ENCODE measurements at regions of chr2 and their contacts with region 1.

Region 1: GRCh38 chr2:172465417-172466334 is 38.3 kb downstream of the ITGA6 start:
- DNase-seq: peak; percentile 63
- ATAC-seq: peak; percentile 31
- H3K4me3 Mint-ChIP-seq: no peak overlapping the region
- H3K27ac Mint-ChIP-seq: peak overlapping the region; percentile 11
- H3K4me1 Mint-ChIP-seq: peaks cover 47% of the 10 kb centered on the region
- H3K27me3 Mint-ChIP-seq: no peaks in the 10 kb centered on the region
- CTCF ChIP-seq: peak; percentile 78

Region 2: DNA sequence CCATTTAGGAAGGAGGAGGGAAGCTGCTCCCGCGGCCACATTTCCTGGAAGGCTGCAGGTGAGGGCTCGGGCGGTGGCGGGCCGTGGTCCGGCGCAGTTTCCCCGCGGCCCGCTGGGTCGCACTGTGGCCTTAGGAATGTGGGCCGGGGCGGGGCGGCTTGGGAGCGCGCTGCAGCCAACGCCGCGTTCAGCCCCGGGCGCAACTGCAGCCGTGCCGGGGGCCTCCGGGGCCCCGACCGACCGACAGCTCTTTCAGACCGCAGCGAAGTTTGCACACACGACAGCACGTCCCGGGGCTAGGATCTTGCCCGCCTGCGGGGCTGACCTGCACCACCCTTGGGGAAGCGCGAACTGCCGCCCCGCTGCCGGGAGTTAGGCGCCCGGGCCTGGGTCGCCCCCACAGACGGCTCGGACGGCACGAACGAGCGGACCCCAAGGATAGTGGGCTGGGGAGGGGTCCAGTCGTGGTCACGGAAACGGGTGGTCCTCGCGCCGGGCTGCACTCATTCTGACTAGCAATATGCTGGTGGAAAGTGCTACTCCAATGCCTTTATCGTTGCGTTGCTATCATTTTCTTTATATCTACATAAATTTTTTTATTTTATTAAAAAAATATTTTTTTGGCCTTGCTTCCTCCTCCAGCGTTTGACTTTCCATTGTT is 293.0 kb before region 1 on chr2:
- CTCF ChIA-PET with region 1: interaction called, 136 read pairs
- POLR2A ChIA-PET with region 1: interaction called, 11 read pairs
- DNase-seq: peak; percentile 87
- ATAC-seq: peak; percentile 99
- H3K4me3 Mint-ChIP-seq: peak overlapping the region; percentile 67
- H3K27ac Mint-ChIP-seq: no peak overlapping the region
- H3K4me1 Mint-ChIP-seq: peaks cover 19% of the 10 kb centered on the region
- H3K27me3 Mint-ChIP-seq: peaks cover 10% of the 10 kb centered on the region
- CTCF ChIP-seq: 0 out of 2 replicates have a peak, but pooled peaks have one; percentile 44

Region 3: DNA sequence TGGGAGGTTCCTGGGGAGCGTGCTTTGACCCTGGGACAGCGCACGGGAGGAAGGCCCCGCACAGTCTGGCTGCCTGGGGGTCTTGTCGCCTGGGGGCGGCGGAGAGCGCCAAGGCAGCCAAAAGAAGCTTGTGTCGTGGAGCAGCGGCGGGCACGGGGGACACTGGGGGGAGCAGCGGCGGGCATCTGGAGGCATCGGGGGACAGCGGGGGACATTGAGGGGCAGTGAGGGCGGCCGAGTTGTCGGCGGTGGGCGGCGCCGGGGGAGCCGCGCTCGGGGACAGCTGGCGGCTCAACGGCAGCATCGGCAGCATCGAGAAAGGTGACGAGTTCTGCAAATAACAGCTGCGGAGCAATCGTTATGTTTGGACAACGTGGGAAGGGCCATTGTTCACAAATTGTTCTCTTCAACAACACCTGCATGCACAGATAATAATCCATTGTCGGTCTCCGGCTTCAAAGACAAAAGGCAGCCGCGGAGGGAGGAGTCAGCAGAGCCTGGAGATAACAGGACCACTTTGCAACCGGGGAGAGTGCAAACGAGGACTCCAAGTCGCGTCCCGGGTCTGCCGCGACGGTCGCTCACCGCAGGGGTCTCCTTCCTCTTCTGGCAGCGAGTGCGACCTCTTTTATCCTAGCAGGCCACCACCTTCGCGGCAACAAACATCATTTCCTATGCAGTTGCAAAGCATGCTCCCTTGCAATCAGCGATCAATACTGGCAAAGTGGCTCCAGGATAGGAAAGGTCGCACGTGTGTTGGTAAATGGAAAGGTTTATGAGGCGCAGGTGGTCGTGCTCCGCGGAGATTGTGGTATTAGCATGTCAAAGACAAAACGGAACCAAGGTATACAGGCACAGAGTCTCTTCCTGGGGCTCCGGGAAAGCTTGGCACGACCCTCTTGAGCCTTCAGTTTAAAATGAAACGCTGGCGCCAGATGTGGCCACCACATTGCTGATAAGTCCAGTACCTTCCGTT is 230.7 kb before region 1 on chr2:
- CTCF ChIA-PET with region 1: interaction called, 22 read pairs
- POLR2A ChIA-PET with region 1: no interaction called
- DNase-seq: peak; percentile 68
- ATAC-seq: peak; percentile 73
- H3K4me3 Mint-ChIP-seq: peak overlapping the region; percentile 75
- H3K27ac Mint-ChIP-seq: peak overlapping the region; percentile 78
- H3K4me1 Mint-ChIP-seq: peaks cover 58% of the 10 kb centered on the region
- H3K27me3 Mint-ChIP-seq: peaks cover 32% of the 10 kb centered on the region
- CTCF ChIP-seq: no peak

Region 4: DNA sequence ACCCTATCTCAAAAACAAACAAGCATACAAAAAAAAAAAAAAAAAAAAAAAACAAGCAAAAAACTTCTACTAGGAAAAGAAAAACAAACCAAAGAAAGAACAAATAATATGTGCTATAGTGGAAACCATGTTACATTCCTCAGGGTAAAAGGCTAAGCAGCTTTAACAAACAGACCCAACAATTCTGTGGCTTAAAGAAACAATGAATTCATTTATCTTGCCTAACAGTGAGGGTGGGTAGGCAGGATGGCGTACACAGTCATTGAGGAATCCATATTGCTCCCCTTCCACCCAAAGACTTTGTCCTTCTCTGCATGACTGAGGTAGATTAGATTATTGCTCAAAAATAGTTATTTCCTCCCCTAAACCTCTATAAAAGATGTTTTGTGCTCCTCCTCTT is 101.4 kb before region 1 on chr2:
- CTCF ChIA-PET with region 1: interaction called, 10 read pairs
- POLR2A ChIA-PET with region 1: no interaction called
- DNase-seq: no peak
- ATAC-seq: no peak
- H3K4me3 Mint-ChIP-seq: no peak overlapping the region
- H3K27ac Mint-ChIP-seq: peak overlapping the region; percentile 69; the same call in 1 of the 2 replicates
- H3K4me1 Mint-ChIP-seq: no peaks in the 10 kb centered on the region
- H3K27me3 Mint-ChIP-seq: peaks cover 5% of the 10 kb centered on the region
- CTCF ChIP-seq: no peak

Region 5: DNA sequence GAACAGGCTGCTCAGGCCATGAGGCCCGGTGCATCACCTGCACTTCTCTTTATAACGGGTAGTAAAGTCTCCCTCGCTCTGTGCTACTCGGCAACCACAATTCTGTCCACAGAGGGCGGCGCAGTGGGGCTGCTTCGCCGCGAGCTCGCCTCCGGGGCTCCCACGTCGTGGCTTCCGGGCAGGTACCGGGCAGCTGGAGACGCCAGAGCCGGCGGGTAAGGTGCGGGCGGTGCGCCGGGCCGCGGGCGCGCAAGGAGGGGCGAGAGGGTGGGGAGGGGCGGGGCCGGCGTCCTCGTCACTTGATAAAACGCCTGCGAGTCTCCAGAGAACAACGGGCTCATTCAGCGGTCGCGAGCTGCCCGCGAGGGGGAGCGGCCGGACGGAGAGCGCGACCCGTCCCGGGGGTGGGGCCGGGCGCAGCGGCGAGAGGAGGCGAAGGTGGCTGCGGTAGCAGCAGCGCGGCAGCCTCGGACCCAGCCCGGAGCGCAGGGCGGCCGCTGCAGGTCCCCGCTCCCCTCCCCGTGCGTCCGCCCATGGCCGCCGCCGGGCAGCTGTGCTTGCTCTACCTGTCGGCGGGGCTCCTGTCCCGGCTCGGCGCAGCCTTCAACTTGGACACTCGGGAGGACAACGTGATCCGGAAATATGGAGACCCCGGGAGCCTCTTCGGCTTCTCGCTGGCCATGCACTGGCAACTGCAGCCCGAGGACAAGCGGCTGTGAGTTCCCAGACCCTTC is 38.3 kb before region 1 on chr2 and contains the start of gene ITGA6:
- CTCF ChIA-PET with region 1: interaction called, 88 read pairs
- POLR2A ChIA-PET with region 1: interaction called, 9 read pairs
- DNase-seq: peak; percentile 79
- ATAC-seq: peak; percentile 66
- H3K4me3 Mint-ChIP-seq: peak within 1 kb of the TSS; percentile 91
- H3K27ac Mint-ChIP-seq: peak within 1 kb of the TSS; percentile 87
- H3K4me1 Mint-ChIP-seq: peaks cover 28% of the 10 kb centered on the region
- H3K27me3 Mint-ChIP-seq: peaks cover 13% of the 10 kb centered on the region
- CTCF ChIP-seq: no peak
- total RNA-seq, gene ITGA6: 78.8 to 83.6 TPM (median 82.4 TPM) in 3 replicates

Region 6: DNA sequence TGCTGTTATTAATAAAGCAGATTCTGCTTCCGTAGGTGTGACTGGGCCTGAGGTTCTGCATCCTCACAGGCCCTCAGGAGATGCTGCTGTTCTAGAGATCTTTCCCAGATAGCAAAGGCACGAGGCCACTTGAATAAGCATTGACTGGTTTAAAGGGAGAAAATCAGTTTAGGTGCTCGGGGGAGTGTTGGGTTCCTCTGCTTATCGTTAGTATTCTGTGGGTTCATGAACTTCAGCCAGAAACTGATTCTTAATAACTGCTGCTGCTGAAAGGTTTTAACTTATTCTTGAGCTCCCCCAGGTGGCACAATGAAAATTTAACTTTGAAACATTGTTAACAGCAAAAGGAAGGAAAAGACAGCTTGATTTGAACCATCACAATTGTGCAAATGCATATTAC is 18.6 kb after region 1 on chr2:
- CTCF ChIA-PET with region 1: interaction called, 16 read pairs
- POLR2A ChIA-PET with region 1: no interaction called
- DNase-seq: no peak
- ATAC-seq: no peak
- H3K4me3 Mint-ChIP-seq: no peak overlapping the region
- H3K27ac Mint-ChIP-seq: no peak overlapping the region
- H3K4me1 Mint-ChIP-seq: 0 out of 2 replicates have a peak, but pooled peaks cover 3% of the 10 kb centered on the region
- H3K27me3 Mint-ChIP-seq: no peaks in the 10 kb centered on the region
- CTCF ChIP-seq: no peak

Measured in WTC11 (cell line).